H1 (cell line): ENCODE measurements at regions of chr20 and their contacts with region 1.

Region 1: GRCh38 chr20:56995576-56996075 is 270.8 kb downstream of the BMP7 start:
- DNase-seq: peak; percentile 49 to 88
- H3K4me3 ChIP-seq: no peak overlapping the region
- H3K27ac ChIP-seq: no peak overlapping the region
- H3K4me1 ChIP-seq: no peaks in the 10 kb centered on the region
- H3K27me3 ChIP-seq: peaks cover 0 to 5% (median 0%) of the 10 kb centered on the region in 4 experiments; a peak in 2 of 7 replicates
- CTCF ChIP-seq: peak; percentile 82 to 94 (median 90)
- EP300 ChIP-seq: no peak
- POLR2A ChIP-seq: no peak
- RAD21 ChIP-seq: peak; percentile 73 to 79

Region 2: GRCh38 chr20:56554869-56555268 is 440.8 kb before region 1 on chr20:
- CTCF ChIA-PET with region 1: interaction called, 24 read pairs
- POLR2A ChIA-PET with region 1: no interaction called
- DNase-seq: no peak
- H3K4me3 ChIP-seq: no peak overlapping the region
- H3K27ac ChIP-seq: no peak overlapping the region
- H3K4me1 ChIP-seq: peaks cover 0 to 2% (median 0%) of the 10 kb centered on the region in 4 experiments; a peak in 1 of 7 replicates
- H3K27me3 ChIP-seq: no peaks in the 10 kb centered on the region
- CTCF ChIP-seq: no peak
- EP300 ChIP-seq: no peak
- POLR2A ChIP-seq: no peak
- RAD21 ChIP-seq: no peak

Region 3: DNA sequence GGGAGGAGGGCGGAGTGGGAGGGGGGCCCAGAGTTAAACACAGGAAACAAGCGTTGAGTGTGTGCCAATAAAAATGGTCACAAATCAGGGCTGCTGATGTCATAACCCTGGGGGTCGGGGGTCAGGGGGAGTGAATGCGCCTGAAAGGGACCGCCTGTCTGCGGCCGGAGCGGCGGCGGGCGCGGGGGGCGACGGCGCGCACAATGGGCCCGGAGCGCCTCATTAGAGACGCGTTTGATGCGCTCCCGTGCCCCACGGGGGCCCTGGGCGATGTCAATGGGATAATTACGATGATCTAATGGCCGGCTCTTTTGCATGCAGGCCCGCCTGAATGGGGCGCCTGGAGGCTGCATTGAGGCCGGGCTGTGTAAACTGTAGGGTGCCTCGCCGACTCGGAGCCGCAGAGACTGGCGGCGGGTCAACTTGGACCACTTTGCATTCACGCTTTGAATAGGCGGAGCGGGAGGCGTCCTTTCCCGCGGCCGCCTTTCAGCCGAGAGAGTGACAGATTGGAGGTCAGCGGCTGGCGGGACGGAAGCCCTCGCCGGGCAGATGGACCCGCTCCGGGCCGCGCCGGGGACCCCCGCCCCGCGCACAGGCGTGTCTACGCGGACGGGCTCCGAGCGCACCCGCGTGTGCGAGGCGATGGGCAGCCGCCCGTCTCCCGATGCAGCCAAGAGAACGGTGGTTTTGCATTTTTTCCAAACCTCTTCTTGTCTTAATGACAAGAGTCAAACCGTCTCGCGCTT is 70.4 kb before region 1 on chr20:
- CTCF ChIA-PET with region 1: no interaction called
- POLR2A ChIA-PET with region 1: no interaction called
- DNase-seq: peak; percentile 79 to 85
- H3K4me3 ChIP-seq: peak overlapping the region; percentile 27 to 57 (median 42)
- H3K27ac ChIP-seq: no peak overlapping the region
- H3K4me1 ChIP-seq: peaks cover 1 to 27% (median 12%) of the 10 kb centered on the region in 4 experiments; a peak in 6 of 7 replicates
- H3K27me3 ChIP-seq: peaks cover 17 to 58% (median 50%) of the 10 kb centered on the region in 4 experiments
- CTCF ChIP-seq: no peak
- EP300 ChIP-seq: peak in 1 of 2 experiments; percentile 3; a peak in 1 of 3 replicates
- POLR2A ChIP-seq: no peak
- RAD21 ChIP-seq: no peak

Region 4: DNA sequence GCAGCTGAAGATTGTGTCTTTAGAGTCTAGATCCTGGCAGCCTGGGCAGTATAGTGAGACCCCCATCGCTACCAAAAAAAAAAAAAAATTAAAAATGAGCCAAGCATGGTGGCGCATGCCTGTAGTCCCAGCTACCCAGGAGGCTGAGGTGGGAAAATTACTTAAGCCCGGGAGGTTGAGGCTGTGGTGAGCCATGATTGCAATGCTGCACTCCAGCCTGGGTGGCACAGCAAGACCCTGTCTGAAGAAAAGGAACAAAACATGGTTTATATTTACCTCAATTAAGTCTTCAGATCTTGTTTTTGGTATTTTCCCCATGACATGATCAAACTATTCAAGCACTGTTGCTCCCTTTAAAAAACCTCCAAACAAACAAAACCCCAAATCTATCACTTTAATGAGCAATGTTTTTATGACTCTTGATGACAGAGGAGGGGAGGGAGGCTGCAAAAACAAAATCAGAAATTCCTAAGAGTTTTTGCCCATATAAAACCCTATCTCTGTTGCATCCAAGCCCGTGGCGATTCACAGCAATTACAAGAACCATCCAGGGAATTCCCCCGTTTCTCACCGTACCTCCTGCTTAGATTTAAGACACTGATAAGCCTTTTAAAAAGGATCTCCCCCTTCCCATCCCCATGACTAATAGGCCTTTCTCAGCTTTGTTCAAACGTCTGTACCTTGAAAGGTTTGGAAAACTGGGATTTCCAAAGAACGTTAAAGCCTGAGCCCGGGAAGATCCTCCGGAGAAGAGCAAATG is 11.0 kb after region 1 on chr20:
- CTCF ChIA-PET with region 1: interaction called, 60 read pairs
- POLR2A ChIA-PET with region 1: interaction called, 3 read pairs
- DNase-seq: no peak
- H3K4me3 ChIP-seq: no peak overlapping the region
- H3K27ac ChIP-seq: no peak overlapping the region
- H3K4me1 ChIP-seq: peaks cover 0 to 8% (median 0%) of the 10 kb centered on the region in 4 experiments; a peak in 1 of 7 replicates
- H3K27me3 ChIP-seq: no peaks in the 10 kb centered on the region
- CTCF ChIP-seq: no peak
- EP300 ChIP-seq: no peak
- POLR2A ChIP-seq: no peak
- RAD21 ChIP-seq: no peak

Region 5: DNA sequence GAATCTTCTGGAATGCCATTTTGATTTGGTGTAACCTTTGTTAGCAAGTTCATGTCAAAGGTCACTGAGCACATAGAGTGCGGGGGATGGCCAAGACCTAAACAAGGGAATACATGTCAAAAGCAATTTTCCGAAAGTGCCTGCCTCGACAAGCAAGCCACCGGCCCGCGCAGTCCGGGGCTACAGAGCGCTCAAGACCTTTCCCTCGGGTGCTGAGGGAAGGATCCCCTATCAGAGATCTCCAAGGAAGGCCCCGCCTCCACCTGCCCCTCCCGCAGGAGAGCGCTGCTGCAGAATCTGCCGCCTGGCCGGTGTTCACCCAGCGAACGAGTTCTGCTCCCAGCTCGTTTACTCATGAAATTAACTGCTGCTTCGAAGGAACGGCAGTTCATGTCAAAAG is 18.1 kb after region 1 on chr20:
- CTCF ChIA-PET with region 1: interaction called, 60 read pairs
- POLR2A ChIA-PET with region 1: no interaction called
- DNase-seq: peak in 1 of 2 experiments; percentile 71
- H3K4me3 ChIP-seq: peak overlapping the region in 1 of 4 experiments; percentile 37; a peak in 3 of 8 replicates
- H3K27ac ChIP-seq: no peak overlapping the region
- H3K4me1 ChIP-seq: peaks cover 2 to 3% (median 2%) of the 10 kb centered on the region in 4 experiments; a peak in 6 of 7 replicates
- H3K27me3 ChIP-seq: peaks cover 0 to 3% (median 2%) of the 10 kb centered on the region in 4 experiments; a peak in 5 of 7 replicates
- CTCF ChIP-seq: no peak
- EP300 ChIP-seq: no peak
- POLR2A ChIP-seq: no peak
- RAD21 ChIP-seq: no peak

Region 6: DNA sequence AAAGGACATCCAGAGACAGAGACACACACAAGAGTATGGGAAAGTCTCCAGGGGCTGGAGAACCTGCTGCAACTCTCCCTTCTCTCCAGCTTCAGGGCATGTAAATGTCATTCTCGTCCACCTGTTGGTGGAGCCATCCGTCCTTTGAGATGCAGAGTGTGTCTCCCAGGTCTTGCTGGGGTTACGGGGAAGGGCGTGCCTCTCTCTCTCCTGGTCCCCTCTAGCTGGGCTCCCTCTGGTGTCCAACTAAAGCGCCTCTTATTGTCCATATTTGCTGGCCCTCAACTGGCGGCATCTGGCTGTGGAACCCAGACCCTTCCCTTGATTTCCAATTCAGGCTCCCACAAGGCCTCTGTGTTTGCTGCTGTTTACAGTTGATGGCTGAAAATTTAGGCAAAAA is 26.7 kb after region 1 on chr20:
- CTCF ChIA-PET with region 1: interaction called, 12 read pairs
- POLR2A ChIA-PET with region 1: no interaction called
- DNase-seq: peak; percentile 62 to 65
- H3K4me3 ChIP-seq: no peak overlapping the region; a peak in 1 of 8 replicates
- H3K27ac ChIP-seq: no peak overlapping the region
- H3K4me1 ChIP-seq: peaks cover 0 to 8% (median 4%) of the 10 kb centered on the region in 4 experiments; a peak in 6 of 7 replicates
- H3K27me3 ChIP-seq: peaks cover 0 to 2% (median 0%) of the 10 kb centered on the region in 4 experiments; a peak in 1 of 7 replicates
- CTCF ChIP-seq: peak in 2 of 3 experiments; percentile 67 to 85; a peak in 3 of 4 replicates
- EP300 ChIP-seq: no peak
- POLR2A ChIP-seq: no peak
- RAD21 ChIP-seq: peak; percentile 67 to 75

Region 7: DNA sequence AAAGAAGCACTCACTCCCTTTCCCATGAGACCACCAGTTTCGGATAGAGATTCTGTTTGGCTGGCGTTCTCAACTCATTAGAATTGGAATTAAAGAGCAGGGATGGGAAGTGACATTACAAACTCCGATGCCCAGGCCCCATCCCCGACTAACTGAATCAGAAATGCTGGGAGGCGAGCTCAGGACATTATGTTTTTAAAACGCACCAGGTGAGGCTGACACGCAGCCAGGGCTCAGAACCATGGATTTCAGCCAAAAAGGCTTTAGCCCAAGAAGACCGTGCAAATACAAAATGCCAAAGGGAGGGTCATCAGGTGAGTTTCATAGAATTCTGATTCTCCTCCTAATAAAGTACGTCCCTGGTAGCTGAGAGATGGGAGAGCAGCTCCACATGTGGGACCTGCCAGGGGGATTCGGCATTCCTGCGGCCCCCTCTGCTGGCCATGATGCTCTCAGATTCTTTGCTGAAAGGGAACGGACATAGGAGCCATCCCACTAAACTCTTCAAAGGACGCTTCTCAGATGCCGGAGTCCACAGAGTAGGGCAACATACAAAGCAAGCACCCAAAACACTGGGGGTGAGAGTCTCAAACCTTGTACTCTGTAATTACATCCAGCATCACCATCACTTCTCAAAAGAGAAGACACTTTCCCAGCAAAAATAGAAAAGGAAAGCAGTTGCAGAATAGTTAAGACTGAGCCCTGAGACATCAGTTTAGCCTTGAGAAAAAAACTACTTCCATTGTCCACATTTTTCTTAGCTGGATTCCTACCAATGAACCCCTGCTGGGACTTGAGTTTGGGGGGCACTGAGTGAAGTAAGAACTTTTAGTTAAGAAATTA is 65.7 kb after region 1 on chr20:
- CTCF ChIA-PET with region 1: interaction called, 10 read pairs
- POLR2A ChIA-PET with region 1: no interaction called
- DNase-seq: peak in 1 of 2 experiments; percentile 75
- H3K4me3 ChIP-seq: no peak overlapping the region
- H3K27ac ChIP-seq: no peak overlapping the region
- H3K4me1 ChIP-seq: no peaks in the 10 kb centered on the region
- H3K27me3 ChIP-seq: no peaks in the 10 kb centered on the region; a peak in 1 of 7 replicates
- CTCF ChIP-seq: peak; percentile 65 to 81 (median 66)
- EP300 ChIP-seq: no peak
- POLR2A ChIP-seq: no peak
- RAD21 ChIP-seq: peak; percentile 89

Region 8: DNA sequence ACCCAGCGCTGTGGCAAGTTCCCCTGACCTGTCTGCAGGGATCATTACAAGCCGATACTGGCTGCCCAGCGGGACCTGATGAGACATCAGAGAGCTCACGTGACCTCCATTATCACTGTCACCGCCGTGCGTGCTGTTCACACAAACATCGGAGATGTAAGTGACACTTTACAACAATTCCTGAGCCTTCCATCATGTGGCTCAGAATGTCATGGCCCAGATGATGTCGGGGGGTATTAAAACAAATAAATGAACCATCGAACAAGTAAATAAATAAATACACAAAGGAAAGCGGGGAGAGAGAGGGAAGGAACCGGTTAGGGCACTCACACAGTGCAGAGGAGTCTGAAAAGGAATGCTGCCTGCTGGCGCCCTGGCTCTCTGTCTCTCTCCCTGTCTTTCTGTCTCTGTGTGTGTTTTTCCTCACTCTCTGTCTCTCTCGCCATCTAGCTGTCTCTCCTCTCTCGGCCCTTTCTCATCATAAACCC is 75.7 kb after region 1 on chr20:
- CTCF ChIA-PET with region 1: interaction called, 10 read pairs
- POLR2A ChIA-PET with region 1: no interaction called
- DNase-seq: peak in 1 of 2 experiments; percentile 69
- H3K4me3 ChIP-seq: peak overlapping the region; percentile 42 to 59 (median 52); a peak in 7 of 8 replicates
- H3K27ac ChIP-seq: no peak overlapping the region
- H3K4me1 ChIP-seq: peaks cover 4 to 18% (median 9%) of the 10 kb centered on the region in 4 experiments
- H3K27me3 ChIP-seq: peaks cover 4 to 27% (median 19%) of the 10 kb centered on the region in 4 experiments
- CTCF ChIP-seq: no peak
- EP300 ChIP-seq: no peak; a peak in 1 of 3 replicates
- POLR2A ChIP-seq: no peak
- RAD21 ChIP-seq: no peak

Region 9: GRCh38 chr20:57160985-57161384 is 165.4 kb after region 1 on chr20:
- CTCF ChIA-PET with region 1: no interaction called
- POLR2A ChIA-PET with region 1: no interaction called
- DNase-seq: no peak
- H3K4me3 ChIP-seq: no peak overlapping the region
- H3K27ac ChIP-seq: no peak overlapping the region
- H3K4me1 ChIP-seq: peaks cover 0 to 11% (median 4%) of the 10 kb centered on the region in 4 experiments; a peak in 3 of 7 replicates
- H3K27me3 ChIP-seq: no peaks in the 10 kb centered on the region; a peak in 2 of 7 replicates
- CTCF ChIP-seq: no peak
- EP300 ChIP-seq: no peak
- POLR2A ChIP-seq: no peak
- RAD21 ChIP-seq: no peak